Activated naive CD4-positive, alpha-beta T cell treated with anti-CD3 and anti-CD28 coated beads, Interleukin-2, amount 10 ng/mL, durations not matched to agents 7 days and 5 days (primary cell): ENCODE measurements at regions of chr4 and their contacts with region 1.

Region 1: DNA sequence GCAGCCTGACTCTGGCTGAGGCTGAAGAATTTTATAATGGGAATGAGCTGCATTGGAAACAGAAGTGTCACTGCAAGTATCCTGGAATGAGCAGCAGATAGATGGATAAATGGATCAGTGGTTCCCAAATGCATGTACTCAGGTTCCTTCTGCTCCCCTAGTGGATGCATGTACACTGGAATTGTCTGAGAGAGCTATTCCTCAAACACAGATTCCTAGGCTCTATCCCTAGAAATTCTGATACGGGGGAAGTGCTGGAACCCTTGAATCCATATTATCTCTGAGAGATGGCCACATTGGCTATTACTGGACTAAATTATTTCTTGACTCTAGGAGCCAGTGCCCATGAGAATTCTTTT is 64.8 kb downstream of the TMEM131L start:
- DNase-seq: no peak
- H3K4me3 Mint-ChIP-seq: peak overlapping the region; percentile 65
- H3K27ac Mint-ChIP-seq: peak overlapping the region; percentile 93
- H3K4me1 Mint-ChIP-seq: peaks cover 84% of the 10 kb centered on the region
- H3K27me3 Mint-ChIP-seq: no peaks in the 10 kb centered on the region

Region 2: DNA sequence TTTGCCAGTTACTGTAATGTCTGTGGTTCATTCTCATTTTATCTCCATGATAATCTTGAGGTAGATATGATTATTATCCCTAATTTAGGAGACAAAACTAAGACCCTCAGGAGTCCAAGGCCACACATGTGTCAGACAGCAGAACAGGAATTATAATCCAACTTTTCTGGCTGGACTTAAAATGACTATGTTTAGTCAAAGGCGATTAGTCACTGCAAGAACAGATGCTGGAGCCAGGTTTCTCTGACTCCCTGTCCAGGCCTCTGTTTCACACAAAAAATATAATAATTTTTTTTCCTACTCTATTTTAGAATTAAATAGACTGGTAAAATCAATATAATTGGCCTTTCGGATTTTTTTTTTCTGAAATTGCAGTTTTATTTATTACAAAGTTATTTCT is 121.6 kb before region 1 on chr4:
- CTCF ChIA-PET with region 1: no interaction called
- DNase-seq: no peak
- H3K4me3 Mint-ChIP-seq: no peak overlapping the region
- H3K27ac Mint-ChIP-seq: no peak overlapping the region
- H3K4me1 Mint-ChIP-seq: peaks cover 11% of the 10 kb centered on the region
- H3K27me3 Mint-ChIP-seq: no peaks in the 10 kb centered on the region

Region 3: GRCh38 chr4:153451911-153452657 is 78.9 kb before region 1 on chr4:
- CTCF ChIA-PET with region 1: no interaction called
- DNase-seq: no peak
- H3K4me3 Mint-ChIP-seq: no peak overlapping the region
- H3K27ac Mint-ChIP-seq: no peak overlapping the region
- H3K4me1 Mint-ChIP-seq: peaks cover 43% of the 10 kb centered on the region
- H3K27me3 Mint-ChIP-seq: no peaks in the 10 kb centered on the region

Region 4: DNA sequence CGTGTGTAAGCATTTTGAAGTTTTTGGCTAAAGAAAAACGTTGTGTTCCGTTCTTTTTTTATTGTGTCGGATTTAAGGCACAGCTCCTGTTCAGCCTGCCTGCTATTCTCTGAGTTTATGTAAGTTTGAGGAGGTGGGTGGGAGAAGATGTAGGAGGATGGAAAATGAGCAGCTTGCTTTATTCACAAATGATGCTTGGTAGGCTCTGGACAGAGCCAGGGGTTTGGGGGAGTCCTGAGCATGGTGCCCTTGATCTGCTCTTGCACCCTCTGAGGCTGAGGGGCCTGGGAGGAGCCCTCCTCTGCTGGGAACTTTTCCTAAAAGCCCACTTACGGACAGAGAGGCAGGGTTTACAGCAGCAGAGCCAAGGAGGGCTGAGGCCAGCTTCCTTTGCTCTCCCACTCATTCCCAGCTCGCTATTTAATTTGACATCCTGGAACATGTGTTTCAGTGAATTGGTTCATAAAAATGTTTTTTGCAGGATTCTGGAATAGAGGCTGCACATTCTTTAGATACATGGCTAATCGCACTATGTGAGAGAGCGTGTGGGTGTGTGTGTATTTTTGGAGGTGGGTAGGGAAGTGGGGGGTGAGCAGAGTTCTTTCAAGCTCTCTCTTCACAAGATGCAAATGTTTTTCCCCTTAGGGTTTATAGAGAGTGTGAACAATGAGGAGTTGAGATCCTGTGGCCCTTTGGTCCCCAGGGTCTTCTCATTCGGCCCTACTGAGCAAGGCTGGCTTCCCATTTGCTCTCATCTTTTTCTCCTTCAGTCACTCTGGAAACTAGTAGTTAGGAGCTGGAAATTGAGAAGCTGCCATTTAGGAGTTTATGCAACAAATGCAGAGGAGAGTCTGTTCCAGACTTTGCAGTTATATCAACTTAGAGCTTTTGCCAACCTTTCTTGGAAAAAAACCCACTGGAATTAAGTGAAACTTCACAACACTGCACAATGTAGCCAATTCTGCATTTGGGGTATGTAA is 32.7 kb before region 1 on chr4:
- CTCF ChIA-PET with region 1: interaction called, 16 read pairs
- DNase-seq: no peak
- H3K4me3 Mint-ChIP-seq: peak overlapping the region; percentile 66
- H3K27ac Mint-ChIP-seq: peak overlapping the region; percentile 99
- H3K4me1 Mint-ChIP-seq: peaks cover 94% of the 10 kb centered on the region
- H3K27me3 Mint-ChIP-seq: no peaks in the 10 kb centered on the region

Region 5: DNA sequence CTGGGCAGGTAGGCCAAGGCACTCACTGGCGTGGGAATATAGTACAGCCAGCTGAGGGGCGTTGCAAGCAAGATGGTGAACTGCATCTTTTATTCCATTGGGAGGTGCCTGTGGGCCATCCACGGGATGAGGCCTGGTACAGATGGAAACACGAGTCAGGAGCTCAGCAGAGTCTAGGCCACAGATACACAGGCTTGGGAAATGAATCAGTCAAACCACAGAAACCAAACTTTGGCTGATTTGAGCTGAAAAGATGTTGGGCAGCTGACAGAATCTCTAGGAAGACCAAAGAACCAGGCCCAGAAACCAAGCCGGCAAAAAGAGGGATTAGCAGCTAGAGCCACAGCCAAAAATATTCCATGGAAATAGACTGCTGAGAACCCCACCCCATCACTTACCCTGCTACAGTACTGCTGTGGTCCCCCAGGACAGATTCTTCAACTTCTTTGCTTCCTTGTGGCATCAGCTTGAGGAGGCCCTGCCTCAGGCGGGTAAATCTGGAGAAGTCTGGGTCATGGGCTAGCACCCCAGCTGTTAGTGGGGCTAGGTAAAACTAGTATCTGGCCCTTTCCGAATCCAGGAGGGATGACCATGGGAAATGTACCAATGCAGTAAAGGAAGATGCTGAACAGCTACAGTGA is 10.6 kb after region 1 on chr4:
- CTCF ChIA-PET with region 1: interaction called, 17 read pairs
- DNase-seq: peak; percentile 28
- H3K4me3 Mint-ChIP-seq: no peak overlapping the region
- H3K27ac Mint-ChIP-seq: peak overlapping the region; percentile 39
- H3K4me1 Mint-ChIP-seq: peaks cover 47% of the 10 kb centered on the region
- H3K27me3 Mint-ChIP-seq: no peaks in the 10 kb centered on the region